ENCODE measurements at regions of chr13 and their contacts with region 1.

Region 1: GRCh38 chr13:24683838-24684599 is 3.8 kb downstream of the ATP12A start:
- H3K4me3 ChIP-seq: no peak overlapping the region
- H3K27ac ChIP-seq: no peak overlapping the region
- H3K4me1 ChIP-seq: peaks cover 3% of the 10 kb centered on the region; the same call in 1 of the 2 replicates
- CTCF ChIP-seq: peak; percentile 17; the same call in 1 of the 2 replicates

Region 2: DNA sequence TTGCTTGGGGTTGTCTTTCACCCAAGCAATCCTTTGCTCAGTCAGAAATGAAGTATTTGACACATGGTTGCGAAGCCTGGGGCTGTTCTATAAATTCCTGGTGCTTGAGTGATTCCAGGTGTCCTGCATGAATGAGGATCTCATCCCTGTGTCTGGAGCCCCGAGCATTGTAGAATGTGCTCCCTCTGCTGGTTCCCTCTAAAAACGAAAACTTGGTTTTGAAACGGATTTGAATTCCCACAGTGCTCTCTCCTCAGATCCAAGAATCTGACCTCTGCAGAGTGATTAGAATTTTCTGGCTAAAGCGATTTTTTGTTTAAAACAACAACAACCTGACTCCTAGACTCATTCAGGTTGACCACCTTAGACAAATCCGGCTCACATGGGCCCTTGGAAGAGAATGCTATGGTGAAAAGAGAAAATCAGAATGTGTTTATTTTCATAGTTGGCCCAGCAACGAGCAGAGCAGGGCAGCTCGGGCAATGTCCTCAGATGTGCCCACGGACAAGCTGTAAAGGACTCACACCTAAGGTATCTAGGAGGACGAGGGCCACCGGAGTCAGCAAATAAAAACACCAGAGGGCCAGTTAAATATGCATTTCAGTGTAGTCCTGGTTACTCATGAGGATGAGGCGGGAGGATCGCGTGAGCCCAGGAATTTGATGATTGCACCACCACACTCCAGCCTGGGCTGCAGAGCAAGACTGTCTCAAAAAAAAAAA is 12.5 kb before region 1 on chr13:
- CTCF ChIA-PET with region 1: interaction called, 14 read pairs
- POLR2A ChIA-PET with region 1: no interaction called
- H3K4me3 ChIP-seq: no peak overlapping the region
- H3K27ac ChIP-seq: no peak overlapping the region
- H3K4me1 ChIP-seq: no peaks in the 10 kb centered on the region
- CTCF ChIP-seq: no peak

Region 3: GRCh38 chr13:24727731-24728601 is 43.9 kb after region 1 on chr13:
- CTCF ChIA-PET with region 1: interaction called, 11 read pairs
- POLR2A ChIA-PET with region 1: no interaction called
- H3K4me3 ChIP-seq: no peak overlapping the region
- H3K27ac ChIP-seq: no peak overlapping the region
- H3K4me1 ChIP-seq: no peaks in the 10 kb centered on the region
- CTCF ChIP-seq: peak; percentile 81

Region 4: GRCh38 chr13:24802074-24802473 is 118.1 kb after region 1 on chr13:
- CTCF ChIA-PET with region 1: no interaction called
- POLR2A ChIA-PET with region 1: no interaction called
- H3K4me3 ChIP-seq: no peak overlapping the region
- H3K27ac ChIP-seq: no peak overlapping the region
- H3K4me1 ChIP-seq: no peaks in the 10 kb centered on the region
- CTCF ChIP-seq: no peak

Region 5: GRCh38 chr13:25468325-25469168 is 784.5 kb after region 1 on chr13:
- CTCF ChIA-PET with region 1: interaction called, 10 read pairs
- POLR2A ChIA-PET with region 1: no interaction called
- H3K4me3 ChIP-seq: peak overlapping the region; percentile 52
- H3K27ac ChIP-seq: no peak overlapping the region
- H3K4me1 ChIP-seq: no peaks in the 10 kb centered on the region
- CTCF ChIP-seq: 0 out of 2 replicates have a peak, but pooled peaks have one; percentile 16